ENCODE measurements at regions of chr2 and their contacts with region 1.

Region 1: GRCh38 chr2:51389666-51390065 is 357.7 kb upstream of the NRXN1 start:
- DNase-seq: no peak
- ATAC-seq: no peak
- H3K4me3 Mint-ChIP-seq: no peak overlapping the region
- H3K27ac Mint-ChIP-seq: no peak overlapping the region
- H3K4me1 Mint-ChIP-seq: no peaks in the 10 kb centered on the region
- H3K27me3 Mint-ChIP-seq: no peaks in the 10 kb centered on the region
- CTCF ChIP-seq: no peak

Region 2: GRCh38 chr2:51053213-51053612 is 336.5 kb before region 1 on chr2:
- CTCF ChIA-PET with region 1: no interaction called
- POLR2A ChIA-PET with region 1: no interaction called
- intact Hi-C with region 1: no loop called
- DNase-seq: no peak
- ATAC-seq: no peak
- H3K4me3 Mint-ChIP-seq: no peak overlapping the region
- H3K27ac Mint-ChIP-seq: no peak overlapping the region
- H3K4me1 Mint-ChIP-seq: no peaks in the 10 kb centered on the region
- H3K27me3 Mint-ChIP-seq: no peaks in the 10 kb centered on the region
- CTCF ChIP-seq: no peak

Region 3: GRCh38 chr2:51243892-51244535 is 145.7 kb before region 1 on chr2:
- CTCF ChIA-PET with region 1: no interaction called
- POLR2A ChIA-PET with region 1: no interaction called
- intact Hi-C with region 1: no loop called
- DNase-seq: no peak
- ATAC-seq: no peak
- H3K4me3 Mint-ChIP-seq: no peak overlapping the region
- H3K27ac Mint-ChIP-seq: no peak overlapping the region
- H3K4me1 Mint-ChIP-seq: no peaks in the 10 kb centered on the region
- H3K27me3 Mint-ChIP-seq: no peaks in the 10 kb centered on the region
- CTCF ChIP-seq: no peak

Region 4: DNA sequence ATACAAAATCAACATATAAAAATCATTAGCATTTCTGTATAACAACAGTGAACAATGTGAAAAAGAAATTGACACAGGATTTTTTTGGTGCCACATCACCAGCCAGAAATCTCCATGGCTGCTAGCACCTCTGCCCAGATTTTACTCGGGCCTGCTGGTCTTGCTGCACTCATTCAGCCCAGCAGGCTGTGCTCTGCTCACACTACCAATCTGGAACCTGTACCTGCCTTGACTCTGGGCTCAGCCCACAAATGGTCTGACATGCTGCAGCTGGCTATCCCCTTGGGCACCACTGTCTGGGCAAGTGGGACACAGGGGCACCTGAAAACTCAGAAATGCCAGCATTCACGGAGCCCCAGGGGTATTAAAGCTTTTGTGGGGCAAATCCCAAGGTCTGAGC is 34.8 kb after region 1 on chr2:
- CTCF ChIA-PET with region 1: no interaction called
- POLR2A ChIA-PET with region 1: no interaction called
- intact Hi-C with region 1: loop called (anchors 1 kb)
- DNase-seq: no peak
- ATAC-seq: no peak
- H3K4me3 Mint-ChIP-seq: no peak overlapping the region
- H3K27ac Mint-ChIP-seq: no peak overlapping the region
- H3K4me1 Mint-ChIP-seq: no peaks in the 10 kb centered on the region
- H3K27me3 Mint-ChIP-seq: no peaks in the 10 kb centered on the region
- CTCF ChIP-seq: no peak

Region 5: GRCh38 chr2:51612387-51612786 is 222.7 kb after region 1 on chr2:
- CTCF ChIA-PET with region 1: no interaction called
- POLR2A ChIA-PET with region 1: no interaction called
- intact Hi-C with region 1: no loop called
- DNase-seq: no peak
- ATAC-seq: no peak
- H3K4me3 Mint-ChIP-seq: no peak overlapping the region
- H3K27ac Mint-ChIP-seq: no peak overlapping the region
- H3K4me1 Mint-ChIP-seq: no peaks in the 10 kb centered on the region
- H3K27me3 Mint-ChIP-seq: no peaks in the 10 kb centered on the region
- CTCF ChIP-seq: no peak

Region 6: GRCh38 chr2:53018825-53019425 is 1629.3 kb after region 1 on chr2:
- CTCF ChIA-PET with region 1: no interaction called
- POLR2A ChIA-PET with region 1: no interaction called
- intact Hi-C with region 1: no loop called
- DNase-seq: no peak
- ATAC-seq: no peak
- H3K4me3 Mint-ChIP-seq: no peak overlapping the region
- H3K27ac Mint-ChIP-seq: no peak overlapping the region
- H3K4me1 Mint-ChIP-seq: no peaks in the 10 kb centered on the region
- H3K27me3 Mint-ChIP-seq: no peaks in the 10 kb centered on the region
- CTCF ChIP-seq: no peak

Measured in activated B cell treated with CpG ODN at 0.5 μM for 24 hours (primary cell).